Activated naive CD4-positive, alpha-beta T cell treated with anti-CD3 and anti-CD28 coated beads for 36 hours (primary cell): ENCODE measurements at regions of chr6 and their contacts with region 1.

Region 1: DNA sequence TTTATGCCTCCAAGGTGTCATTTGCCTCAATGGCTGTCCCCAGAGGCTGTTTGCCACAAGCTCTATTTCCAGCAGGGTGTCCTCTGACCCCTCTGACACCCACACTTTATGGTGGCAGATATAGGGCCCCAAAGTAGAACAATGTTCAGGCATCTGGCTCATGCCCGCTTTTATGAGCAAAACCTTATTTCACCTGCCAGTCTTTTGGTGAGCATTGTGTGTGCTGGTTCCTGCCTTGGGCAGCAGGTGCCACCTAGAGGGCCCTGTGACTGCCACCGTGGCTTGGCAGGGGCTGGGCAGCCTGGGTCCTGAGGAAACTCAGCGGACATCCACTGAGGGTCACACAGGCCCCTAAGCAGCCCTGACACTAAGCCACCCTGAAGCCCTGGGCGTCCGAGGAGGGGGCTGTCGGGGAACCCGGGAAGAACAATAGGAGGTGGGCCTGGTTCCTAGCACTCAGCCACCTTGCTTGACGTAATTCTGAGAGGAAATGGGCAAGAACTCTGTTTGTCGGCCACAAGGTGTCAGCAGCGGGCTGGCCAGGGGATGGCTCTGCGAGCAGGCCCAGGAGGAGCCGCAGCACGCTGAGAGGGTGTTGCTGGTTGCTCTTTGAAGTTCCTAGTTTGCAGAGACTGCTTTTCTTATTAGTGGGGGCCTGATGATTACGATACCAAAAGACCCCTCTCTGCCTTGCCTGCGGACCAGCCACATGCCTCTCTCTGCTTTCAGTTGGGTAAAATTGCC is 148.9 kb downstream of the SCML4 start:
- DNase-seq: peak; percentile 94
- H3K4me3 Mint-ChIP-seq: peak overlapping the region; percentile 55
- H3K27ac Mint-ChIP-seq: peak overlapping the region; percentile 72
- H3K4me1 Mint-ChIP-seq: peaks cover 6% of the 10 kb centered on the region
- H3K27me3 Mint-ChIP-seq: no peaks in the 10 kb centered on the region

Region 2: GRCh38 chr6:107114213-107114905 is 560.8 kb before region 1 on chr6:
- CTCF ChIA-PET with region 1: no interaction called
- intact Hi-C with region 1: loop called (anchors 1 kb)
- DNase-seq: peak; percentile 62
- H3K4me3 Mint-ChIP-seq: peak overlapping the region; percentile 77
- H3K27ac Mint-ChIP-seq: peak overlapping the region; percentile 66
- H3K4me1 Mint-ChIP-seq: peaks cover 16% of the 10 kb centered on the region
- H3K27me3 Mint-ChIP-seq: peaks cover 9% of the 10 kb centered on the region

Region 3: GRCh38 chr6:107179004-107179403 is 496.2 kb before region 1 on chr6:
- CTCF ChIA-PET with region 1: no interaction called
- intact Hi-C with region 1: loop called (anchors 2 kb)
- DNase-seq: peak; percentile 39
- H3K4me3 Mint-ChIP-seq: no peak overlapping the region
- H3K27ac Mint-ChIP-seq: no peak overlapping the region
- H3K4me1 Mint-ChIP-seq: no peaks in the 10 kb centered on the region
- H3K27me3 Mint-ChIP-seq: no peaks in the 10 kb centered on the region

Region 4: GRCh38 chr6:107330168-107330567 is 345.0 kb before region 1 on chr6:
- CTCF ChIA-PET with region 1: no interaction called
- intact Hi-C with region 1: no loop called
- DNase-seq: peak; percentile 68
- H3K4me3 Mint-ChIP-seq: peak overlapping the region; percentile 33
- H3K27ac Mint-ChIP-seq: peak overlapping the region; percentile 61
- H3K4me1 Mint-ChIP-seq: peaks cover 13% of the 10 kb centered on the region
- H3K27me3 Mint-ChIP-seq: no peaks in the 10 kb centered on the region

Region 5: GRCh38 chr6:107704347-107705013 is 29.3 kb after region 1 on chr6:
- CTCF ChIA-PET with region 1: interaction called, 5 read pairs
- intact Hi-C with region 1: loop called (anchors 1 kb)
- DNase-seq: no peak
- H3K4me3 Mint-ChIP-seq: no peak overlapping the region
- H3K27ac Mint-ChIP-seq: no peak overlapping the region
- H3K4me1 Mint-ChIP-seq: peaks cover 19% of the 10 kb centered on the region
- H3K27me3 Mint-ChIP-seq: no peaks in the 10 kb centered on the region

Region 6: DNA sequence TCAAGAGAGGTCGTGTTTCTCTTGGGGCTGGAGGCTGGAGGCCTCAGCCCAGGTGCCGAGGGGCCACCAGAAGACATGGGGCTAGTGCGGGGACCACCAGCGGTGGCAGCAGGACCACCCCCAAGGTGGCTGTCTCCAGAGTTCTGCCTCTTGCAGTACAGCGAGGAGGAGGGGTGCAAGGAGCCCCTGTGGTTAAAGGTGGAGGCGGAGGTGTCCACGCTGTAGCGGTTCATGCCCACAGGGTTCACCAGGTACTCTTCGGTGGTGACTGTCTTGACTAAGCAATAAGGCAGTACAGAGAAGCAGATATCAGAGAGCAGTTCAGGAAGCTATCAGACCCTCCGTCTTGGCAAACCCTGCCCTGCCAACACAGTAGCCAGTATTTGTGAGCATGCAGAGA is 45.5 kb after region 1 on chr6:
- CTCF ChIA-PET with region 1: no interaction called
- intact Hi-C with region 1: no loop called
- DNase-seq: no peak
- H3K4me3 Mint-ChIP-seq: no peak overlapping the region
- H3K27ac Mint-ChIP-seq: no peak overlapping the region
- H3K4me1 Mint-ChIP-seq: peaks cover 65% of the 10 kb centered on the region
- H3K27me3 Mint-ChIP-seq: no peaks in the 10 kb centered on the region

Region 7: DNA sequence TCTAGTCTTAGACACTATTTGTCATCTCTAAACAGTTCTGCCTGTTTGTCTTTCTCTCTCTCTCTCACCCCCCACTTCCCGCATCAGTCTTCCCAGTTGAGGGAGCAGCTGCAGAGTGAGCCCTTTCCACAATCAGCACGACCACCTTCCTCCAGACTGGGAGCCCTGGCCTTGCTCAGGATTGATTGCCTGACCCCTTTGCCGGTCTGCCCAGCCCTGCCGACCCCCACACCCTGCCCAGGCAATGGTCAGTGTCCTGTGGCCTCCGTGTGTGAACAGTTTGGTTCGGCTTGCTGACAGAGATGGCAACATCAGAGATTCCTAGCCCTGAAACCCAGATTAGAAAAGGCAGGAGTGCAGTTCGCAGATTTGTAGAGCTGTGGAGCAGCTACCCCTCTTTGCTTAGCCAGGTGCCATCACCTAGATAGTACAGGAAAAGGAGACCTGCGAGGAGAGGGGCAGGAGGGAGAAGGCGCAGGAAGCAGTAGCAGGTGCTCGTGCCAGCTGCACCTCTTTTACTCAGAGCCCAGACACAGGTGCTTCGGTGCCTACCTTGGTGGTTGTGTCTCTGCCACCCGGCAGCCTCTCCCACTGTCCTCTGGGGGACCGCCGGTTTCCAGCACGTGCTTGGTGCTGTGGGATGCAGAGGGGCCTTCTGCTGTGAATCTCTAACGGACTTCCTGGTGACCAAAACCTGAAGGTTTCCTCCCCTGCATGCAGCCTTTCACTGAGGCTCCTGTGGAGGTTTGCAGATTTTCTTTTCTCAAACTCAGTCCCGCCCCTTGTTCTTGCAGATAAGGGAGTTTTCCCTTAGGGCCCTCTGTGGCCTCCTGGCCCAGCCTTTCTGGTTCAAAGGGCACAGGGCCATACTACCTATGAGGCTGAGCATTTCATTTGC is 56.5 kb after region 1 on chr6:
- CTCF ChIA-PET with region 1: interaction called, 9 read pairs
- intact Hi-C with region 1: loop called (anchors 1 kb)
- DNase-seq: peak; percentile 43
- H3K4me3 Mint-ChIP-seq: peak overlapping the region; percentile 80
- H3K27ac Mint-ChIP-seq: peak overlapping the region; percentile 86
- H3K4me1 Mint-ChIP-seq: peaks cover 74% of the 10 kb centered on the region
- H3K27me3 Mint-ChIP-seq: no peaks in the 10 kb centered on the region

Region 8: DNA sequence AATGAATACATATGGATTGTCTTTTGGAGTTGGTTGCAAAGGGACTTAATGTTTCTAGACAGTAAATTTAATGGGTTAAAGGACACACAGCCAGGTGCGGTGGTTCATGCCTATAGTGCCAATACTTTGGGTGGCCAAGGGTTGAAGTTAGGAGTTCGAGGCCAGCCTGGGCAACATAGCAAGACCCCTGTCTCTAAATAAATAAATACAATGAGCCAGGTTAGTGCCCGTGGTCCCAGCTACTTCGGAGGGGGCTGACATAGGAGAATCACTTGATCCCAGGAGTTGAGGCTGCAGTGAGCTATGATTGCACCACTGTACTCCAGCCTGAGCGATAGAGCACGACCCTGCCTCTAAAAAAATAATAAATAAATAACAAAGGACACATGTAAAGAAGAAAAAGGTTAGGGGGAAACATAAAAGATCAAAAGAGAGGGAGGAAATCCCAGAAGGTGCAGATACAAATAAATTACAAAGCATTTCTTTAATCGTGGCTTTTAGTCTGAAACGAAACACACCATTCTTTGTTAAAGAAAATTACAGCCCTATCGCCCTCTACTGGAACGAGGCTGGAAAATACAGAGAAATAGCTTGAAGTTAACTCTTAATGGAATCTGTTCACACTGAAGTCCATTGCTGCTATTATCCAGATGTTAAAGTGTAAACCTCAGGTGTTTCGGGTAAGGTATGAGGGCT is 191.6 kb after region 1 on chr6:
- CTCF ChIA-PET with region 1: interaction called, 30 read pairs
- intact Hi-C with region 1: loop called (anchors 1 kb)
- DNase-seq: peak; percentile 56
- H3K4me3 Mint-ChIP-seq: no peak overlapping the region
- H3K27ac Mint-ChIP-seq: no peak overlapping the region
- H3K4me1 Mint-ChIP-seq: peaks cover 35% of the 10 kb centered on the region
- H3K27me3 Mint-ChIP-seq: no peaks in the 10 kb centered on the region

Region 9: DNA sequence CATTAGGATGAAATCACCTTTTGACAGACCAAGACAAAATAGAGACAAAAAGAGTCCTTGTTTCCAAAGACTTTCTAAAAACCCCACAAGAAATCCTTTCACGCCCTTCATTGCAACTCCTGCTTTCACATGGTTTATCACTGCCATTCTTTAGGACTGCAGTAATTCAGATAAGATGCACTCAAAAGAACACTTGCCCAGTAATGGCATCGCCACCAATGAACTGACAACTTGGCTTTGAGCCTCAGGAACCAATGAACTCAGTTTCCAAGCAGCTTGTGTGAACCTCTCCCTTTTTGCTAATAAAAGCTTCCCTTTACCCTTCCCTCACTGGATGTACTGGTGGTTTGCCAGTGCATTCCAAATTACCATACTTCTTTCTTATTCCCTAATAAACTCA is 377.5 kb after region 1 on chr6:
- CTCF ChIA-PET with region 1: interaction called, 11 read pairs
- intact Hi-C with region 1: loop called (anchors 1 kb)
- DNase-seq: no peak
- H3K4me3 Mint-ChIP-seq: no peak overlapping the region
- H3K27ac Mint-ChIP-seq: no peak overlapping the region
- H3K4me1 Mint-ChIP-seq: no peaks in the 10 kb centered on the region
- H3K27me3 Mint-ChIP-seq: no peaks in the 10 kb centered on the region